ENCODE measurements at regions of chr12 and their contacts with region 1.

Region 1: GRCh38 chr12:575948-576612 is 87.2 kb downstream of the NINJ2 start:
- ATAC-seq: peak; percentile 80 to 98 (median 94)
- H3K4me3 ChIP-seq: no peak overlapping the region
- H3K27ac ChIP-seq: no peak overlapping the region
- H3K4me1 ChIP-seq: peaks cover 16 to 25% of the 10 kb centered on the region in 2 donors

Region 2: DNA sequence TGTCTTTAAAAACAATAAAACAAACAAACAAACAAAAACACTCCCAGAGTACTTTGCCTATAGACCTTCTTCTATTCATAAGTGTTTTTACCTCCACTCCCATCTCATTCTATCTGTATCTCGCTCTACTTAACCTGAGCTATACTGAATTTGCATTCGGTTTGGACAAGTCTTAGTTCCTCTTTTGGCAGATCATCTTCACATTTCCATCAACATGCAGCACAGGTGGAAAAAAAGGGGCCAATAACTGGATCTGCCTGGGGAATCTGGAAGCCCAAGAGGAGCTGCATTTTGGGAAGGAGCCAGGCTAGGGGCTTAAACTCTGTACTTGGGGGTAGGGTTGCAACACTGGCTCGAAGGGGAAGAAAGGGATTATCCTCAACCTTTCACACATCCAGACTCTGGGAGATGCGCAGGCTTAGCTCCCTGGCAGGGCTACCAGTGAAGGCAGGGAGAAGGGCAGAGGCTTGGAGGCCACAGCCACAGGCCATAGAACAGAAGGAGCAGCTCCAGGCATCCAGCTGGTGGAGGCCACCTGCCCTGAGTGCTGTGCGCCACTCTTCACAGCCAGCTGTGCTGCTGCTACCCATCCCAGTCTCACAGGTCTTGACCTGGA is 83.1 kb after region 1 on chr12:
- in situ Hi-C with region 1: no loop called
- ATAC-seq: no peak
- H3K4me3 ChIP-seq: no peak overlapping the region
- H3K27ac ChIP-seq: no peak overlapping the region
- H3K4me1 ChIP-seq: no peaks in the 10 kb centered on the region

Region 3: DNA sequence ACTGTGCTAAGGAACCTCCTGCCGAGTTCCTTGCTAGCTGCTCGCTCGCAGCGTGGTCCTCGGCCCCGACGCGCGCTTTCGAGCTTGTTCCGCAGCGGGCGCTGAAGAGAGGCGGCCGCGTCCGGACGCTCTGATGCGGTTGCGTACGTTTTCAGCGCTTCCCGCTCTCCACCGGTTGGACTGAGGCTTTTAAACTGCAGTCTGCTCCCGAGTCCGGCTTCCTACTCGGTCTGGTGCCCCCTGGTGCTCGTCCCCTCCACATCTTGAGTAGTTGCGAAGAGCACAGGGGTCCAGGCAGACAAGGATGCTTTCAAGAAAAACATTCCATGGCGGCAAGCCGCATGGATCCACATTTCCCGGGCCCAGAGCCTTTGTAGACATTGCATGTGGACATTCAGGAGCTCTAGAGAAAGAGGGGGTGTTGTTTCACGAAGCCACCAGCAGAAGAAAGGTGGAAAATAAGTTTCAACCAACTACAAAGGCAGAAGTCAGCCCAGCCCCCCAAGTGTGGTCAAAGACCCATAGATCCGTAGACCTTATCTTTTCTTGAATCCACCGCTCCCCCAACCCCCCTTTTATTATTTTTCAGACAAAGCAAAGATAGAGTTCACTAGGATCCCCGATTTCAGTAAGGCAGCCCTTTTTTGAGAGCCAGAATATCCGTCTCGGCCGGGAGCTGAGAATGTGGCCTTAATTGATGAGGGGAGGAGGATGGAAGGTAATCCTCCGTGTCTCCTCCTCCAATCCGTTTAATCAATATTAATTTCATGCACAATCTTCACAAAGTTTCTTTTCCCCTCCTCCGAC is 175.3 kb after region 1 on chr12:
- in situ Hi-C with region 1: loop called in 1 of 9 experiments (anchors 25 kb)
- ATAC-seq: peak; percentile 35 to 64 (median 58)
- H3K4me3 ChIP-seq: peak overlapping the region; percentile 35 to 94 (median 87)
- H3K27ac ChIP-seq: peak overlapping the region; percentile 79 to 85
- H3K4me1 ChIP-seq: peaks cover 6 to 9% of the 10 kb centered on the region in 2 donors

Region 4: GRCh38 chr12:949453-950191 is 373.5 kb after region 1 on chr12 and contains the start of gene RAD52:
- in situ Hi-C with region 1: loop called in 5 of 9 experiments (anchors 10 to 25 kb)
- ATAC-seq: peak; percentile 85 to 97 (median 94)
- H3K4me3 ChIP-seq: peak within 1 kb of the TSS; percentile 57 to 73 (median 67)
- H3K27ac ChIP-seq: peak within 1 kb of the TSS; percentile 78 to 85
- H3K4me1 ChIP-seq: peaks cover 0 to 4% of the 10 kb centered on the region in 2 donors
- total RNA-seq, gene RAD52: 9.0 to 31.4 (median 15.1) TPM

Region 5: DNA sequence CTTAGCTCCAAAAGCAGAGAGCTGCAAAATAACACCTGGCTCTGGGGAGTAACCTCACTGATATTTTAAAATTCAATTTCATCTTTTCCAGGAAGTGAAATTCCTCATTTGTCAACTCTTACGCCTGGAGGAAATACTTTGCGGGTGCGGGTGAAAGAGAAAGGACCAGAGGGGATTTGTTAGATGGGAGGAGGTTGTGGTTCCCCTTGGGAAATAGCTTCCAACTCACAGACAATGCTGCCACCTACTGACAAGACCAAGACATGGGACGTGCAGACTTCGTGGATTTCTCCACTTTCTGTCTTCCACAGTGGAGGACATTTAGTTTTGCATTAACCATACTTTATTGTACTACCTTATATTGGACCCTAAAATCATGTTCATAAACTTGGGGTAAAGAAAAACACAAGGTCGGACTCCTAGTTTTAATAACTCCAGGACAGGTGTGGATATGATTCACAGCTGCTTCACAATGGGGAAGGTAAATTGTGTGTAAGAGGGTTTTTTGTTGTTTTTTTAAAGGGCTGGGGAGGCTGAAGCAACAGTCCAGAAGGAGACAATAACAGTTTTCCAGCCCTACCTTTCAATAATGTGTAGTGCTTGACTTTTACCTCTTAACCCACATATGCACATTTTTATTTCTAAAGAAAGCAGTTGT is 1007.5 kb after region 1 on chr12:
- in situ Hi-C with region 1: loop called in 4 of 9 experiments (anchors 10 to 25 kb)
- ATAC-seq: peak; percentile 72 to 86 (median 82)
- H3K4me3 ChIP-seq: no peak overlapping the region
- H3K27ac ChIP-seq: no peak overlapping the region
- H3K4me1 ChIP-seq: peaks cover 38 to 40% of the 10 kb centered on the region in 2 donors

Measured in motor neuron (in vitro differentiated cells).